Right cardiac atrium (tissue), 5 donors: ENCODE measurements at regions of chr2 and their contacts with region 1.

Region 1: GRCh38 chr2:219571311-219572236 is at the start of gene OBSL1:
- DNase-seq: peak; percentile 85 to 95 (median 93)
- ATAC-seq: peak; percentile 82 to 85
- H3K4me3 ChIP-seq: peak within 1 kb of the TSS; percentile 77
- H3K27ac ChIP-seq: peak within 1 kb of the TSS; percentile 95
- H3K4me1 ChIP-seq: peaks cover 1% of the 10 kb centered on the region
- H3K27me3 ChIP-seq: no peaks in the 10 kb centered on the region
- total RNA-seq, gene OBSL1: 263 to 321 (median 294) TPM

Region 2: DNA sequence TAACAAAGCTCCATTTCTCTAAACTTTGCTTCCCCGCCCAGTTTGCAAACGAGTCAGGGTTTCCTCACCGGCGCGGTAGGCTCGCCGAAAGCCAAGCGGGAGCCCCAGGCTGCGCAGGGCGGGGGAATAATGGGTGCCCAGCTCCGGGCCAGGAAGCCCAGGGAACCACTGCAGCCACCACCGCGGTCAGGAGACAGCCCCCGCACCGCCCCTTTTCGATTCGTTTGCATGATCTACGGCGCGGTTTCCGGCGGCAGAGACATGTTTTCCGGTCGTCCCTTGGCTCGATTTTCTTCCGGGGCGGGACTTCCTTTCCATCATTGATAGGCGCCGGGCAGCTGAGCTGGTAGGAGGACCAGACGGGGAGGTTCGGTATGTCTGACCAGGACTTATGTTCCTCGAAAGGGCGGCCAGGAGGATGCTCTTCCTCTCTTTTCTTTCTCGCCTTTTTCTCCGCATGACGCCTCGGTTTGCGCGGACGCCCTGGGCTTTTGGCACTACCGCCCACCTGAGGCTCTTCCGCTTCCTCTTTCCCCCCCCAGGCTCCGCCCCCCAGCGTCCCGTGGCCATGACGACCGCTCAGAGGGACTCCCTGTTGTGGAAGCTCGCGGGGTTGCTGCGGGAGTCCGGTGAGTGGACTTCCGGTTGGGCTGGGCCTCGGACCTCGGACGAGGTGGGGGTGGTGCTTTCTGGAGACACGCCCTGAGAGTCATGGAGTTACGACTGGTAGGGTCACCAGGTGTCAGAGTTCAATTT is 26.2 kb after region 1 on chr2 and contains the start of gene STK11IP:
- intact Hi-C with region 1: loop called in 1 of 4 experiments (anchors 2 kb)
- DNase-seq: peak; percentile 97 to 99 (median 98)
- ATAC-seq: peak; percentile 98
- H3K4me3 ChIP-seq: peak within 1 kb of the TSS; percentile 69
- H3K27ac ChIP-seq: peak within 1 kb of the TSS; percentile 87
- H3K4me1 ChIP-seq: no peaks in the 10 kb centered on the region
- H3K27me3 ChIP-seq: no peaks in the 10 kb centered on the region
- total RNA-seq, gene STK11IP: 12.1 to 19.0 (median 15.1) TPM

Region 3: GRCh38 chr2:219627103-219628100 is 55.8 kb after region 1 on chr2 and contains the start of gene SLC4A3:
- intact Hi-C with region 1: loop called in 1 of 4 experiments (anchors 5 kb)
- DNase-seq: peak; percentile 41 to 77 (median 72)
- ATAC-seq: peak; percentile 10 to 19
- H3K4me3 ChIP-seq: peak within 1 kb of the TSS; percentile 62
- H3K27ac ChIP-seq: peak within 1 kb of the TSS; percentile 93
- H3K4me1 ChIP-seq: peaks cover 2% of the 10 kb centered on the region
- H3K27me3 ChIP-seq: no peaks in the 10 kb centered on the region
- total RNA-seq, gene SLC4A3: 322 to 445 (median 392) TPM

Region 4: DNA sequence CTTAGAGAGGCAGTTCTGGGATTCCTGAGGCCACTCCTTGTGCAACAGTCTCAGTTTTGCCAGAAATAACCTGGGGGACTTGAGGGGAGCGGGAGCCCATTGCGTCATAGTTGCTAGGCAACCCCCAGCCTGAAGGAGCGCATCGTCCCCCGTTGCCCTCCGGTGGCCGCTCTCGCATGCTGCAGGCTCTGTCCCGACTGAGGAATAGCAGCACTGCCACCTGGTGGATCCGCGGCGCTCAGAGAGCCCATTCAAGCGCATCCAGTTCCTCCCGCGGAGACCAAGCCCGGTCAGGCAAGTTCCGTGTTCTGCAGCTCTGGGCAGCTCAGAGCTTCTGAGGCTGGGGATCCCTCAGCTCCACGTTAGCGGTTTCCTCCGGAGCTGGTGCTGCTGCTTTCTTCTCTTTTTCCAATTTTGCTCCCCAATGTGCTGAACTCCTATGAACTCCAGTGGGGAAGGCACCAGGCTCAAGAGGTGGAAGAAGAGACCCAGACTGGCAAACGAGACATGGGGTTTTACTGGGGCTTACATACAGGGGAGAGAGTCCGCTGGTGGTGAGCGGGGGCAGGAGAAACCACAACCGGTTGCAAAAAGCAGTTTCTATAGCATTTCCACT is 71.0 kb after region 1 on chr2:
- intact Hi-C with region 1: loop called in 1 of 4 experiments (anchors 5 kb)
- DNase-seq: peak; percentile 98 to 99 (median 99)
- ATAC-seq: peak; percentile 72 to 73
- H3K4me3 ChIP-seq: no peak overlapping the region
- H3K27ac ChIP-seq: peak overlapping the region; percentile 96
- H3K4me1 ChIP-seq: peaks cover 2% of the 10 kb centered on the region
- H3K27me3 ChIP-seq: no peaks in the 10 kb centered on the region